KBM-7 (cell line): ENCODE measurements at regions of chr2 and their contacts with region 1.

Region 1: DNA sequence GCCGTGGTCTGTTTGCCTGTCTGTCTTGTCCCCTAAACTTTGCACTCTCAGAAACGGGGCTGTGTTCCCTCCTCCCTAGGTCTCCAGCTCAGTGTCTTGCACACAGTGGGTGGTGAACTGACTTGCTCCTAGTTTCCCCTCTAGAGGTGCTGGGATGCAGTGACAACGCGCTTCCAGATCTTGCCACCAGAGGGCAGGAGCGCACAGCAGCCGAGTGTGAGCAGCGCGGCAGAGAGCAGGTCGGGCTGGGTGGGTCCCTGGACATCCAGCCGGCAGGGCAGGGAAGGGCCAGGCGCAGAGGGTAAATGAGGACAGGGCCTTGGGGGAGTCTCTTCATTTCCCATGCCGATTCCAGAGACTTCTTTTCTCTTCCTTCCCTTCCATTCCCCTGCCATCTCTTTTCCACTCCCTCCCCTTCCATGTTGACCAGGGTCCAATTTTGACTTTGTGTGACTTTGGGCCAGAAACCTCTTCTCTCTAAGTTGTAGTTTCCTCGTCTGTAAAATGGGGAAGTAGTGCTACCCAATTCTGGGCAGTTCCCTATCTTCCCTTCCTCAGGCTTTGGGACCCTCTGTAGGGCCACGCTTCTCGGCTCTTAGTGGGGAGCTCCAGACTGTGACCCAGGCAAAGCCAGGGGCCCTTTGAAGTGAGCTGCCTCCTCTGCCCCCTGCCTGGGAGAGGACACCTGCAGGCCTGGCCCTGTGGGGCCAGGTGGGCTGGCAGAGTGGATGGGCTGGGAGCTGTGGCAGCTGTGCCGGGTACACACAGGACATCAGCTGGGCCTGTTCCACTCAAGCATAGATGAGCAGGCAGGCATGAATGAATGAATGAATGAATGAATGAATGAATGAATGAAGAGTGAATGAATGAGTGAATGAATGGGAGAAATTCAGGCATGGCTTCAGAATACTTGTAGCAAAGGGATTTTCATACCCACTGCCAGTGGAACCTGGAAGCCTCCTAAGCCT is 43.3 kb upstream of the TAF1B start:
- DNase-seq: peak; percentile 93

Region 2: GRCh38 chr2:9336576-9337314 is 463.2 kb before region 1 on chr2:
- in situ Hi-C with region 1: no loop called
- DNase-seq: no peak

Region 3: GRCh38 chr2:10057231-10058107 is 257.5 kb after region 1 on chr2:
- in situ Hi-C with region 1: loop called (anchors 10 kb)
- DNase-seq: peak; percentile 55